Calu3 (cell line): ENCODE measurements at regions of chr16 and their contacts with region 1.

Region 1: DNA sequence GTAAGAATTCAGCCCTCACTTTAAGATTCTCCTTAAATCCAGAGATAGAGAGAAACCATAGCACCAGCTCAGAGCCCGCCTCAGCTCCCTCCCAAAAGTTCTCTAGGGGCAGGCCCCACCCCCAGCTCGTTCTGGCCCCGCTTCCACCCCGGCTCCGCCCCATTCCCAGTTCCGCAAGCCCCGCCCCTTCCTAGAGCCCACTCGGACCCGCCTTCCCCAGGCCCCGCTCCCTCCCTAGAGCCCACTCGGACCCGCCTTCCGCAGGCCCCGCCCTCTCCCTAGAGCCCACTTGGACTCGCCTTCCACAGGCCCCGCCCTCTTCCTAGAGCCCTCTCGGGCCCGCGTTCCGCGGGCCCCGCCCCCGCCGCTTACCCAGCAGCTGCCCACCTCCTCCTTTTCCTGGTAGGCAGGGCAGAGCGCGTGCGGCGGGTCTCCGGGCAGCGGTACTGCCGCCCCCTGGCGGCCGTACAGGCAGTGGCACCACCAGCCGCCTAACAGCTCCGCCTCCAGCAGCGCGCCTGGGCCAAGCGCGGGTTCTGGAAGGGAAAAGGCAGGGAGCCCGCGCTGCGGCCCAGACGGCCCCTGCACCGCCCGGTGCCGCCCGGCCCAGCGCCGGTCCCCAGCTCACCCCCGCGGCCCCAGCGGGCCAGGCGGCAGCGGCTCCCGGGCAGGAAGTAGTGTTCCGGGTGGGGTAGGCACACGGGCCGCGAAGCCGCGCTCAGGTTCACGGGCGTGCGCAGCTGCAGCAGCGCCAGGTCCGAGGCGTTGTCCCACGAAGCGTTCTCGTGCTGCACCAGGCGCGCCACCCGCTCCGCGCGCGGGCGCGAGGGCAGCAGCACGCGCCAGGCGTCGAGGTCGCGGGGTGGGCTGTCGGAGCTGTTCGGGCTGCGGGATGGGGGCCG is 6.8 kb upstream of the PRSS8 start:
- DNase-seq: peak; percentile 100
- H3K4me3 Mint-ChIP-seq: peak overlapping the region; percentile 59
- H3K27ac Mint-ChIP-seq: peak overlapping the region; percentile 75
- H3K4me1 Mint-ChIP-seq: peaks cover 50% of the 10 kb centered on the region
- H3K27me3 Mint-ChIP-seq: peaks cover 20% of the 10 kb centered on the region
- CTCF ChIP-seq: peak; percentile 91

Region 2: DNA sequence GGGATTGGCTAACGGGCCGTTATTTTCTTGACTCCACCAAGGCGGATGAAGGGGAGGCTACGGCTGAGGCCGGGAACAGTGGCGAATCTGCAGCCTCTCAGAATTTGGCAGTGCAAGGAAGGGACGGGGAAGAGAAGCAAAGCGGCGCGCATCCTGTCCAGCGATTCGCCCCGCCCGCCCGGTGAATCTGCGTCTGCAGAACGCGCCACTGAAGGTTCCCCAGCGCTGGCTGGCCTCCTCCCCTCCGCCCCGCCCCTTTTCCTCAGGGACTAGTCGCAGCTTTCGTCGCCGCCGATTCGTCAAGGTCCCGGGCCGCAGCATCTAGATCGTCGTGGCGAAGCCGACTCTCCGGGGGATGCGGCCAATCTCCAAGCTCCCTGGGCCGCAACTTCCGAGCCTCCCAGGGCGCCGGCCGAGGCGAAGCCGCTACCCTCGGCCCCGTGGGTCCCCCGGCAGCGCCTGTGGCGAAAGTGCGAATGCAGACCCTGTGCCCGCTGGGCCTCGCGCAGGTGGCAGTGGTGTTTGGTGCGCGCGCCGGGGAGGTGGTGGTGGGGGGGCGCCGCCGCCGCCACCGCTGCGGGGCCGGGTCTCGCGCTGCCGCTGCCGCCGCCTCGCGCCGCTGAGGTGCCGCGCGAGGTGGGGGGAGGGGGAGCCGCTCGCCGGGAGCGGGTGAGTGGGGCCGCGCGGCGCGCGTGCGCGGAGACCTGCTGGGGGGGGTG is 184.7 kb before region 1 on chr16 and contains the start of gene SETD1A:
- CTCF ChIA-PET with region 1: interaction called, 10 read pairs
- intact Hi-C with region 1: no loop called
- DNase-seq: peak; percentile 98
- H3K4me3 Mint-ChIP-seq: peak within 1 kb of the TSS; percentile 87
- H3K27ac Mint-ChIP-seq: peak within 1 kb of the TSS; percentile 97
- H3K4me1 Mint-ChIP-seq: peaks cover 28% of the 10 kb centered on the region
- H3K27me3 Mint-ChIP-seq: no peaks in the 10 kb centered on the region
- CTCF ChIP-seq: no peak
- total RNA-seq, gene SETD1A: 28.8 and 30.5 TPM in 2 replicates

Region 3: GRCh38 chr16:31073968-31074813 is 68.2 kb before region 1 on chr16 and contains the starts of genes ZNF646 and ZNF668:
- CTCF ChIA-PET with region 1: interaction called, 20 read pairs
- intact Hi-C with region 1: loop called (anchors 5 kb)
- DNase-seq: peak; percentile 98
- H3K4me3 Mint-ChIP-seq: peak within 1 kb of the TSS; percentile 88
- H3K27ac Mint-ChIP-seq: peak within 1 kb of the TSS; percentile 89
- H3K4me1 Mint-ChIP-seq: peaks cover 26% of the 10 kb centered on the region
- H3K27me3 Mint-ChIP-seq: no peaks in the 10 kb centered on the region
- CTCF ChIP-seq: no peak
- total RNA-seq, gene ZNF646: 34.4 and 34.9 TPM in 2 replicates
- total RNA-seq, gene ZNF668: 12.5 and 13.0 TPM in 2 replicates

Region 4: DNA sequence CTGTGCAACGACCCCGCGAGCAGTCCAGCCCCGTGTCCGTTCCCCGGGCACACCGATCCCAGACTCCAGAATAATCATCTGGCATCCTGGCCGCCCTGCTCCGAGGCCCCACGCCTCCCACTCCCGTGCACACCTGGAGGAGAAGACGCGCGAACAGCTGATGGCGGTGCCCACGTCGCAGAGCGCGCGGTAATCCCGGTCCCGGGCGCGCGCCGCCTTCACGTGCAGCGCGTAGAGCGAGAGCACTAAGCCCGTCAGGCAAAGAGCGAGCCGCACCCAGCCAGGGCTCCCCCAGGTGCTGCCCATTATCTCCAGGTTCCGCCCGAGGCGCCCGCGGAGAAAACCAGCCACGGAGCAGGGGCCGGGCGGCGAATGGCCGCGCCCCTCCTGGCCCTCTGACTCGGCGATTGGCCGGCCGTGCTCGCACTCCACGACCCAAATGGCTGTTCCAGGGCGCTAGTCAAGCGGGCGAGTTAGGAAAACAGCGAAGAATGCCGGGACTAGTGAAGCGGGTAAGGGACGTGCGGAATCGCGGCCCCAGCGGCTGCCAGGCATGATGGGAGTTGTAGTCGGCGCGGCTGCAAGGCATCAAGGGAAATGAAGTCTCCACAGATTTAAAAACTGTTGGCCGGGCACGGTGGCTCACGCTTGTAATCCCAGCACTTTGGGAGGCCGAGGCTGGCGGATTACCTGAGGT is 47.8 kb before region 1 on chr16 and contains the start of gene VKORC1:
- CTCF ChIA-PET with region 1: interaction called, 16 read pairs
- intact Hi-C with region 1: no loop called
- DNase-seq: peak; percentile 97
- H3K4me3 Mint-ChIP-seq: peak within 1 kb of the TSS; percentile 89
- H3K27ac Mint-ChIP-seq: peak within 1 kb of the TSS; percentile 82
- H3K4me1 Mint-ChIP-seq: peaks cover 12% of the 10 kb centered on the region
- H3K27me3 Mint-ChIP-seq: no peaks in the 10 kb centered on the region
- CTCF ChIP-seq: no peak
- total RNA-seq, gene VKORC1: 80.1 and 86.8 TPM in 2 replicates

Region 5: DNA sequence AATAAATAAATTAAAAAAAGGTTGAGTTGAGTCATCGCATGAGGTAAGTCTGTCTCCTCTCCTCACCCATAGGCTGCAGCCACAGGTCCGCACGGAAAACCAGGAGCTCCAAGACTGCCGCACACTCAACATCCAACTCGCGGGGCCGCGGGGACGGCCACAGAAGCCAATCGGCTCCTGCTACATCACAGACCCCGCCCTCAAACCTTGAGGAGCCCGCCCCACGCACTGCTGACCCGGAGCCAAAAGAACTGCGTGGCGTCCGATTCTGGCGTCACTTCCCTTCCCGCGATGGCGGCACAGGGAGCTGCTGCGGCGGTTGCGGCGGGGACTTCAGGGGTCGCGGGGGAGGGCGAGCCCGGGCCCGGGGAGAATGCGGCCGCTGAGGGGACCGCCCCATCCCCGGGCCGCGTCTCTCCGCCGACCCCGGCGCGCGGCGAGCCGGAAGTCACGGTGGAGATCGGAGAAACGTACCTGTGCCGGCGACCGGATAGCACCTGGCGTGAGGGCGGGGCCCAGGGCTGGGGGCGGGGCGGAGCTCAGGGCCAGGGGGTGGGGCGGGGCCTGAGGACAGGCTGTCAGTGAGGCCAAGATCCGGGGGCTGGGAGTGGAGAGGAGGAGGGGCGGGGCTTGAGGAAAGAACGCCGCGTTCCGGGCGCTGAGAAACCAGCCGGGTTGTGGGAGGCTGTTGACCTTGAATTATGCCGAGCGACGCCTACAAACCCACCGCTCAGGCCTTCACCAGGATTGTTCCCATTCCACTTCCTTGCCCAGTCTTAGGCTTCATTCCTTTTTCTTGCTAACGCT is 24.8 kb before region 1 on chr16 and contains the start of gene KAT8:
- CTCF ChIA-PET with region 1: interaction called, 30 read pairs
- intact Hi-C with region 1: no loop called
- DNase-seq: peak; percentile 99
- H3K4me3 Mint-ChIP-seq: peak within 1 kb of the TSS; percentile 88
- H3K27ac Mint-ChIP-seq: peak within 1 kb of the TSS; percentile 87
- H3K4me1 Mint-ChIP-seq: peaks cover 30% of the 10 kb centered on the region
- H3K27me3 Mint-ChIP-seq: no peaks in the 10 kb centered on the region
- CTCF ChIP-seq: no peak
- total RNA-seq, gene KAT8: 66.6 and 69.9 TPM in 2 replicates

Region 6: DNA sequence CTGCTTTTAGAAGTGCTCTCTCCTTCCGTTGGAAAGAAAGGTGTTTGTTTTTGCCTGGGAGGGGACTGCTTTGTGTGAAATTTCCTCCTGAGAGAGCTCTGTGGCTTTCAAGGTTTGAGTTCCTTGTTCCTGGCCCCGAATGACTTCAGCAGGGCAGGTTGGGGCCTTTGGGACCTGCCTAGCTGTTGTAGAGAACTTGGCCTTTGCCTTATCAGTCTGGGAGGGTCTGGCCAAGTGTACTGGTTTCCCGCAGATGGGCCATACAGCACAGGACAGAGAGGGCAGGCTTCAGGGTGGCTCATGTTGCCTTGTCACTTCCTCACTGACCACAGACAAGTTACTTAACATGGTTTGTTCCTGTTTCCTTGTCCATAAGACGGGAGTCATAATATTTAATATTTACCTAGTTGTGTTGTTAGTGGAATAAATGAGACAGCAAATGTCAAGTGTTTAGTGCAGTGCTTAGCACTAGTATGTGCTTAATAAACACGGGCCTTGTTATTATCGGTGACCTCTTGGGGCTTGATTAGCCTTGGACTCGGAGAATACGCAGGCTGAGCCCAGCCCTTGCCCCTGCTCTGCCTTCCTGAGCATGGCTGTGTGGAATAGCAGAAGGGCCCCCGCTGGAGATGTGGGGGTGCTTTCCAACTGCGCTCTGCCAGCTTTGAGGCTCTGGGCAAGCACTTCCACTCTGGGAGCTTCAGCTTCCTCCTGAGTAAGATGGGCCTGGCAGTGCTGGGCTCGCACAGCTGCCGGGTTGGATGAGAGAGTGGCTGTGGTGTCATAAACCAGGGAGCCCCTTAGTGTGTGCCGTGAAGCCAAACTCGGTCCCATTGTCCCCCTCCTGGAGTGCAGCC is 13.4 kb before region 1 on chr16:
- CTCF ChIA-PET with region 1: interaction called, 38 read pairs
- intact Hi-C with region 1: loop called (anchors 1 kb)
- DNase-seq: peak; percentile 70
- H3K4me3 Mint-ChIP-seq: peak overlapping the region; percentile 51
- H3K27ac Mint-ChIP-seq: peak overlapping the region; percentile 93
- H3K4me1 Mint-ChIP-seq: peaks cover 68% of the 10 kb centered on the region
- H3K27me3 Mint-ChIP-seq: no peaks in the 10 kb centered on the region
- CTCF ChIP-seq: no peak

Region 7: DNA sequence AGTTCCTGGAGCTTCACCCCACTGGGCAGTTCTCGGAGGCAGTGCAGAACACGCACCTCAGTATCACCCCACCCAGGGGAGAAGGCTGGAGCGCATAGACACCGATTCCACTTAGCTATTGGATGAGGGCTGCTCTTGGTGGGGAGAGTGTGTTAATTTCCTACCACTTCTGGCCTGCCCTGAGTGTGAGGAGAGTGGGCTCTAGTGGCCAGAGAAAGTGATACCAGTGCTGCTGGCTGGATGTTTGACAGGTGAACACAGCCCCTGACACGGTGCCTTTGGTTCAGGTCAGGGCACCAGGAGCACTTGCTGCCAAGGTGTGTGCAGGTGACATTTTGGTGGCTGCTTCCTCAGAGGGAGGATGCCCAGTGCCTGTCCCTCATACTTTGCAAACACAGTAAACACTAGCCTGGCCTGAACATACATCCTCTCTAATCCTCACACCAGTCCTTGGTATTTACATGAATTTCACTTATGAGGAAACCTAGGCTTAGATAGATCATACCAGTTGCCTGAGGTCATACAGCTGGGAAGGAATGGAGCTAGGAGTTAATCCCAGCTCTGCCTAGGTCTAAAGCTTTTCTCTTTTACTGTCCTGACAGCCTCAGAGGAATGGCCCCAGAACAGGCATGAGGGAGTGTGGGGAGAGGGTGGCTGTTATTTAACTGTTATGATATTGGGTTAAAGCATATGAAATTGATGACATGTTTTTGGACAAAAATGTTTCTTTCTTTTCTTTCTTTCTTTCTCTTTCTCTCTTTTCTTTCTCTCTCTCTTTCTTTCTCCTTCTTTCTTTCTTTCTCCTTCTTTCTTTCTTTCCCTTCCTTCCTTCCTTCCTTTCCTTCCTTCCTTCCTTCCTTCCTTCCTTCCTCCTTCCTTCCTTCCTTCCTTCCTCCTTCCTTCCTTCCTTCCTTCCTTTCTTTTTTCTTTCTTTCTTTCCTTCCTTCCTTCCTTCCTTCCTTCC is 191.6 kb after region 1 on chr16:
- CTCF ChIA-PET with region 1: interaction called, 12 read pairs
- intact Hi-C with region 1: no loop called
- DNase-seq: peak; percentile 64
- H3K4me3 Mint-ChIP-seq: no peak overlapping the region
- H3K27ac Mint-ChIP-seq: no peak overlapping the region
- H3K4me1 Mint-ChIP-seq: peaks cover 12% of the 10 kb centered on the region
- H3K27me3 Mint-ChIP-seq: peaks cover 36% of the 10 kb centered on the region
- CTCF ChIP-seq: peak; percentile 40